AG04449 (cell line): ENCODE measurements at regions of chr13 and their contacts with region 1.

Region 1: GRCh38 chr13:110218581-110219201 is 88.3 kb downstream of the COL4A1 start:
- DNase-seq: no peak
- H3K4me3 ChIP-seq: no peak overlapping the region
- CTCF ChIP-seq: no peak

Region 2: GRCh38 chr13:110233181-110233950 is 14.7 kb after region 1 on chr13:
- CTCF ChIA-PET with region 1: interaction called, 26 read pairs
- POLR2A ChIA-PET with region 1: no interaction called
- DNase-seq: no peak
- H3K4me3 ChIP-seq: no peak overlapping the region
- CTCF ChIP-seq: no peak

Region 3: GRCh38 chr13:110306960-110307746 is 88.5 kb after region 1 on chr13 and contains the starts of genes COL4A1 and COL4A2:
- CTCF ChIA-PET with region 1: interaction called, 11 read pairs
- POLR2A ChIA-PET with region 1: no interaction called
- DNase-seq: no peak
- H3K4me3 ChIP-seq: peak within 1 kb of the TSS; percentile 78
- CTCF ChIP-seq: no peak

Region 4: DNA sequence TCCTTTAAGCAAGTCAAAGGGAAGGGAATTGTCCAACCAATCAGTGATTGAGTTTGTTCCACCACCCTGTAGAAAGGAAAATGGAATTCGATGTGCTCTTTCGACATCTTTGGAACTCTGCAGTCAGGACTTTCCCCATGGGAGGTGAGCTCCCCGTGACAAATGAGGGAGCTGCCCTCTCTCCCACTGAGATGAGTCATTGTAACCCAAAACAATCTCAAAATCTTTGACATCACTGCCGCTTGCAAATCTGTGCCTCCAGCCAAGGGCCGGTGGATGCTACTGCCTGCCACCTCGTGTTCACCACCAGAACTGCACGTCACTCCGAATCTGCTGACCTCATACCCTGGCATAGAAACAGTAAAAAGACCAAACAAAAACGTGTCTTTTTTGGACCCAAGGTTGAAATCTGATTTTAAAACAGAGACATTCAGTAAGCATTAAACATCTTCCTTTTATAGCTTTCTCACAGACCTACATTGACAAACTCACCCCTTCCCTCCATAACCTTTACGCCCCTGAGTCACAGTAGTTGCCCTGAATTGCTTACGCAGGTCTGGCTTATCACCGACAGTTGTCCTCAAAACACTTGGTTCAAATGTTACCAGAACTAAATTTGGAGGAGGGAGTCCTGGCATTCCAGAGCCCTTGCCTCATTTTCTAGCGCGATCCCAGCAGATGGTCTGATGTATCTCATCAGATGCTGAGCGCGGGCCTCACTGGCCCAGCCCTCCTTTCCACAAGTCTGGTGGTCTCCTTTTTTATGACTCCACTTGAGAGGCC is 193.6 kb after region 1 on chr13:
- CTCF ChIA-PET with region 1: interaction called, 44 read pairs
- POLR2A ChIA-PET with region 1: no interaction called
- DNase-seq: peak; percentile 99
- H3K4me3 ChIP-seq: no peak overlapping the region
- CTCF ChIP-seq: peak; percentile 87

Region 5: DNA sequence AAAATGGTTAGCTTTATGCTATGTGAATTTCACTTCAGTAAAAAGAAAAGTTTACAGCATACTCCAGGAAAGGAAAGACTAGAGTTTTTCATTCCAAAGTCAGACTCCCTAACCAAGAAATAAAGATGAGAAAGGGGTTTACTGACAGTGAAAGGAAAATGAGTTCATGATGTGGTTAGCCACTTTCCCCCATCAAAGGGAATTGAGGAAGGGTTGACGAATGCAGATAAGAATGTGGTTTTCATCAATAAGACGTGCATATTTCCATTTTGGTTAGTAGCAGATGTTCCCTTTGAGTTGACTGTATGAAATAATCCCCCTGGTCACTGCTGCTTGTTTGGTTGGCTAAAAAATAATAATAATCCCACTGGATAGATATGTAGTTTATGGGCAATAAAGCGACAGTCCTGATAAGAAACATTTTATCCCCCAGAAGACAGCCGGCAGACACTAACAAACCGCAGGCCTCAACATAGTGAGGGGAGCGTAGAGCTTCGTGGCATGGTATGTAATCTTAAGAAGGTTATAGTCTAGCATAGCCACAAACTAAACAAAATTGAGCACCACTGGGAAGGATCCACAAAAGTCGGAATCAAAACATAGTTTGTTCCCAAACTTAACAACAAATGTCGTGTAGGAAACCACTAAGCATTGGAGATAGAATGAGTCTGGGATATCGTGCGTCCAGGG is 203.2 kb after region 1 on chr13:
- CTCF ChIA-PET with region 1: interaction called, 16 read pairs
- POLR2A ChIA-PET with region 1: no interaction called
- DNase-seq: no peak
- H3K4me3 ChIP-seq: no peak overlapping the region
- CTCF ChIP-seq: no peak

Region 6: GRCh38 chr13:110444226-110444653 is 225.5 kb after region 1 on chr13:
- CTCF ChIA-PET with region 1: interaction called, 21 read pairs
- POLR2A ChIA-PET with region 1: no interaction called
- DNase-seq: no peak
- H3K4me3 ChIP-seq: no peak overlapping the region
- CTCF ChIP-seq: no peak

Region 7: GRCh38 chr13:110455941-110456340 is 237.2 kb after region 1 on chr13:
- CTCF ChIA-PET with region 1: interaction called, 11 read pairs
- POLR2A ChIA-PET with region 1: no interaction called
- DNase-seq: no peak
- H3K4me3 ChIP-seq: no peak overlapping the region
- CTCF ChIP-seq: peak; percentile 86

Region 8: DNA sequence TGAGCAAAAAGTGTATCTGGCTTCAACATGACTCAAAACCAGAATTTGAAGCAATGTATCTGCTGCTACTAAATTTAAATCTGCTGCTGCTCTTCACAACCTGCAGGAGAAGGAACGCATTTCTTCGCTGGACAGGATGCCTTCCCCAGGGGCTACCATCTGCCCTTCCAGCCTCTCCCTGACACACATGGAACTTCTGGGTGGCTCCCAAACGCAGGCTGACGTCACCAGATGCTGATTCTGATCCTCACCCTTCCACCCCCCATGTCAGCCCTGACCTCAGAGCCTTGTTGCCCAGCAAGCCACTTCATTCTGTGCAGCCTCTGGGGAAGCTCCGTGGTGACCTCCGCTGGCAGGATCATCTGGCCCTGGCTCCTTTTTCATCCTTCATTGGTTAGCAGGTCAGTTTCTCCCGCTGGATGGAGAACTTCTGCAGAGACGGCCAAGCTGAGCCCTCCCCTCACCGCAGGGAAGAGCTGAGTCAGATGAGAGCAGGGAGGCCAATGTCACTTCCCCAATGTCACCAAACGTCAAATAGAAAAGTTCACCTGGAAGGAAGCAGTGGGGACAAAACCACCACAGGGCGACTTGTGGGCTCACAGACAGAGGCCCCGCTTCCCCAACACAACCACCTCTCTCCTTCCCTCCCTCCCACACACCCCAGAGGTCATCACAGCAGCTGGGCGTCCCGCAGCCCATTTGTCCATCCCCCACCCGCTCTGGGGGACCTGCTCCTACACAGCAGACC is 356.8 kb after region 1 on chr13:
- CTCF ChIA-PET with region 1: no interaction called
- POLR2A ChIA-PET with region 1: no interaction called
- DNase-seq: no peak
- H3K4me3 ChIP-seq: no peak overlapping the region
- CTCF ChIP-seq: no peak

Region 9: DNA sequence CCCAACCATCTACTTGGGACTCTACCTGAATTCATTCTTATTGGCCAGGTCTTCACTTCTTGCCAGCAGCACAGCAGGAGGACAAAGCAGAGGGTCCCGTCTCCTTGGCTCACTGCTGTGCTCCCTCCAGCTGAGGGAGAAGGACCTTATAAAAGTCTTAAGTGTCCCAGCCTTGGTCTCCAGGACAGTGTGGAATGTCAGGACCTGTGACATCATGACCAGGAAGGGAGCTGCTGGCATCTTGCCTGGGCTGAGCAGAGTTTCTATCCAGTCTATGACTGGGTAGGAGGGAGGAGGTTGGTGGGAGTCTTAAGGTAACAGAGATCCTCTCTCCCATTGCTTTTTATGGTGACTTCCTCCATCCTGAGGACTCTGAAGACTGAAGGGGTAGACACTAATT is 752.8 kb after region 1 on chr13:
- CTCF ChIA-PET with region 1: no interaction called
- POLR2A ChIA-PET with region 1: no interaction called
- DNase-seq: no peak
- H3K4me3 ChIP-seq: no peak overlapping the region
- CTCF ChIP-seq: no peak